Activated CD4-positive, alpha-beta T cell treated with anti-CD3 and anti-CD28 coated beads, Interleukin-2, amount 10 ng/mL, durations not matched to agents 24 days and 14 days (primary cell): ENCODE measurements at regions of chr1 and their contacts with region 1.

Region 1: GRCh38 chr1:211329764-211330201 is 3.1 kb downstream of the TRAF5 start:
- DNase-seq: peak; percentile 73
- H3K4me3 Mint-ChIP-seq: peak overlapping the region; percentile 91
- H3K27ac Mint-ChIP-seq: peak overlapping the region; percentile 64
- H3K4me1 Mint-ChIP-seq: peaks cover 78% of the 10 kb centered on the region
- H3K27me3 Mint-ChIP-seq: no peaks in the 10 kb centered on the region

Region 2: DNA sequence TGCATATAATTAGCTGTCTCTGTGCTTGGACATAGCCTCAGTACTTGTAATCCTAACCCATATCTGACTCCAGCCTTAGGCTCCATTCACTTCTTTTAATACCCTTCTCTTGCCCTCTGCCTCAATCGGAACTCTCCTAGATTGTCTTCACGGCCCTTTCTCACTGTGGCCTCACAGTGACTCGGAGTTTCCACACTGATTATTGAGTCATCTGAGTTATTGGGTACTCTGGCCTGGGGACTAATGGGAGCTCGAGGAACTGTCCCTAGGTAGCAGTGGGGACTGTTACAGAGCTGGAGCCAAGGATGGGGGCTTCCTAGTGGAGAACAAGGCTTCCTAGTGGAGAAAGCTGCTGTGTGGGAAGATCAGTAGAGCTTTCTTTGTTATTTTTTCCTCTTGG is 13.8 kb after region 1 on chr1:
- intact Hi-C with region 1: loop called (anchors 2 kb)
- DNase-seq: no peak
- H3K4me3 Mint-ChIP-seq: no peak overlapping the region
- H3K27ac Mint-ChIP-seq: peak overlapping the region; percentile 72
- H3K4me1 Mint-ChIP-seq: peaks cover 53% of the 10 kb centered on the region
- H3K27me3 Mint-ChIP-seq: no peaks in the 10 kb centered on the region

Region 3: GRCh38 chr1:211411639-211412038 is 81.9 kb after region 1 on chr1:
- intact Hi-C with region 1: no loop called
- DNase-seq: no peak
- H3K4me3 Mint-ChIP-seq: no peak overlapping the region
- H3K27ac Mint-ChIP-seq: no peak overlapping the region
- H3K4me1 Mint-ChIP-seq: peaks cover 13% of the 10 kb centered on the region
- H3K27me3 Mint-ChIP-seq: peaks cover 12% of the 10 kb centered on the region

Region 4: DNA sequence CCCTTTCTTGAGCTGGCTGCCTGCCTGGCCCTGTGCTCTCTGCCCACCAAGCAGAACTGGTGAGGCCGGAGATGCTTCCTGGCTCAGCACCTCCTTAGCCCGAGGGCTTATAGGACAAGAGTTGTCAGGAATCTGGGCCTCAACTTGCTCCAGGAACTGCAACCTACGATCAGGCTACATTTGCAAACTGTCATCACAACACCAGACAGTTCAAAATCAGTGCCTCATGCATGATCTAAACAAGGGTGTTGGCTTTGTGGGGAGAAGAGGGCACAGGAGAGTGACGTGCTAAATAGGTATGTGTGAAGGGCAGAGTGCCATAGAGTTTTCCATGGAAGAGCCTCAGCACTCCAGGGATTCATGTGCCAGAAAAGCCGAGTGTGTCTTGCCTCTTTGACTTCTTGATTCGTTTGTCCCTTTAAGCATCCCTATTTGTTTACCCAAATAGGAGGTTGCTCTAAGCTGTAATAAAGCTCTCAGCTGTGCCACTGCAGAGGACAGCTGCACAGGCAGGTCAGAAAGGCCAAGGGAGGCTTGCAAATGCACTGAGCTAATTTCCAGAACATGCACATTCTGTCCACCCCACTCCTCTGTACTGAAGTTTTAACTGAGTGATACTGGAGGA is 375.8 kb after region 1 on chr1:
- intact Hi-C with region 1: no loop called
- DNase-seq: no peak
- H3K4me3 Mint-ChIP-seq: no peak overlapping the region
- H3K27ac Mint-ChIP-seq: no peak overlapping the region
- H3K4me1 Mint-ChIP-seq: no peaks in the 10 kb centered on the region
- H3K27me3 Mint-ChIP-seq: peaks cover 16% of the 10 kb centered on the region